ENCODE measurements at regions of chr17 and their contacts with region 1.

Region 1: GRCh38 chr17:8991514-8992285 is 26.2 kb upstream of the PIK3R5 start:
- DNase-seq: no peak

Region 2: GRCh38 chr17:8965394-8966168 is 26.1 kb before region 1 on chr17 and contains the start of gene PIK3R5:
- intact Hi-C with region 1: no loop called
- DNase-seq: peak; percentile 93
- total RNA-seq, gene PIK3R5: 2.0 TPM

Region 3: GRCh38 chr17:9522074-9522473 is 530.4 kb after region 1 on chr17:
- intact Hi-C with region 1: loop called (anchors 2 kb)
- DNase-seq: no peak